ENCODE measurements at regions of chr2 and their contacts with region 1.

Region 1: GRCh38 chr2:47862949-47863348 is 43.3 kb downstream of the FBXO11 start:
- DNase-seq: no peak
- ATAC-seq: no peak
- H3K4me3 ChIP-seq: no peak overlapping the region
- H3K27ac ChIP-seq: no peak overlapping the region
- H3K4me1 ChIP-seq: peaks cover 12 to 13% of the 10 kb centered on the region in 2 experiments
- H3K27me3 ChIP-seq: no peaks in the 10 kb centered on the region
- CTCF ChIP-seq: no peak
- POLR2A ChIP-seq: no peak
- RAD21 ChIP-seq: no peak

Region 2: GRCh38 chr2:47906157-47907038 is 43.4 kb after region 1 on chr2 and contains the start of gene FBXO11:
- CTCF ChIA-PET with region 1: no interaction called
- POLR2A ChIA-PET with region 1: no interaction called
- RAD21 ChIA-PET with region 1: interaction called in 1 of 2 experiments, 6 read pairs
- intact Hi-C with region 1: loop called (anchors 2 kb)
- DNase-seq: peak; percentile 97
- ATAC-seq: peak; percentile 86
- H3K4me3 ChIP-seq: peak within 1 kb of the TSS; percentile 85 to 87
- H3K27ac ChIP-seq: peak within 1 kb of the TSS; percentile 86
- H3K4me1 ChIP-seq: peaks cover 10 to 21% of the 10 kb centered on the region in 2 experiments
- H3K27me3 ChIP-seq: no peaks in the 10 kb centered on the region
- CTCF ChIP-seq: peak in 2 of 3 experiments; percentile 63 to 65; a peak in 4 of 6 replicates
- POLR2A ChIP-seq: peak; percentile 81
- RAD21 ChIP-seq: no peak; the same call in 1 of the 2 replicates
- total RNA-seq, gene FBXO11: 60.2 TPM

Region 3: DNA sequence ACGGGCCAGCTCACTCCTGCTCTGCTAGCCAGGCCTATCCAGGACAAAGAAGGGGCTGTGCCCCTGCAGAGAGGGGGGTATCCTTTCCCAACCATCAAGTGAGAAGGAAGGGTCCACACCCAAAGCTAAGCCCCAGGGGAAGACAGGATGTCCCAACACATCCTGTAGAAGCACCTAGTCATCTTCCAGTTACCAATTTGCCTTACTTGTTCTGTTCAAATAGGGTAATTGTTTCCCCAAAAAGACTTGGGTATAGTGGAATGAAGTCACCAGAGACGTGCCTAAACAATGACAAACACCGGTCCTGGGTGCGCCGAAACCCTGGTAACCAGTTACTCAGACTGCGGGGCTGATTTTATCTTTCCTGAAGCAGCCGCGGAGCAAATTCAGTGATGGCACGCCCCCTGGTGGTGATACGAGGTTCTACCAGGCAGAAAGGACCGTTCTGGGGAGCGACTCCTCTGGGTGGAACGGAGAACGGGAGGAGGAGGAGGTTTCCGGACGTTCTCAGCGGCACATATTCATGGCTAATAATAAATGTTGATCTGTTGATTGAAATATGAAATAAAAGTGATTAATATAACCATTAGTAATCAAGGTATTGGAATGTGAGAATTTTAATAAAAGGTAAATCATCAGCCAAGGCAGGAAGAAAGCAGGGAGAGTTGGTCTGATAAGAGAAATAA is 557.7 kb after region 1 on chr2:
- CTCF ChIA-PET with region 1: interaction called, 3 read pairs
- POLR2A ChIA-PET with region 1: no interaction called
- RAD21 ChIA-PET with region 1: no interaction called
- intact Hi-C with region 1: loop called (anchors 5 kb)
- DNase-seq: peak; percentile 70
- ATAC-seq: peak; percentile 97
- H3K4me3 ChIP-seq: peak overlapping the region; percentile 15 to 24; a peak in 3 of 4 replicates
- H3K27ac ChIP-seq: no peak overlapping the region
- H3K4me1 ChIP-seq: peaks cover 3 to 12% of the 10 kb centered on the region in 2 experiments; a peak in 3 of 4 replicates
- H3K27me3 ChIP-seq: no peaks in the 10 kb centered on the region
- CTCF ChIP-seq: peak; percentile 96 to 99 (median 98)
- POLR2A ChIP-seq: no peak
- RAD21 ChIP-seq: peak; percentile 99

Measured in HCT116 (cell line).